Dorsolateral prefrontal cortex (tissue), 120 donors: ENCODE measurements at regions of chr20 and their contacts with region 1.

Region 1: GRCh38 chr20:21090111-21090618 is 16.0 kb downstream of the LINC00237 start:
- DNase-seq: no peak
- H3K4me3 ChIP-seq: peak overlapping the region in 47 of 59 donors; percentile 2 to 49 (median 25)
- H3K27ac ChIP-seq: peak overlapping the region in 40 of 59 donors; percentile 1 to 78 (median 43)
- H3K27me3 ChIP-seq: peaks cover 0 to 39% (median 8%) of the 10 kb centered on the region in 45 donors
- CTCF ChIP-seq: no peak

Region 2: GRCh38 chr20:21048841-21049273 is 41.3 kb before region 1 on chr20:
- intact Hi-C with region 1: loop called in 1 of 2 experiments (anchors 5 kb)
- DNase-seq: peak in 1 of 10 donors; percentile 54
- H3K4me3 ChIP-seq: no peak overlapping the region
- H3K27ac ChIP-seq: no peak overlapping the region
- H3K27me3 ChIP-seq: peaks cover 0 to 26% (median 0%) of the 10 kb centered on the region in 45 donors
- CTCF ChIP-seq: peak in 55 of 56 donors; percentile 23 to 76 (median 56)